ENCODE measurements at regions of chr9 and their contacts with region 1.

Region 1: GRCh38 chr9:134443168-134444037 is 117.1 kb downstream of the RXRA start:
- DNase-seq: peak; percentile 83
- H3K4me3 ChIP-seq: no peak overlapping the region
- H3K27ac ChIP-seq: no peak overlapping the region
- H3K4me1 ChIP-seq: peaks cover 17% of the 10 kb centered on the region
- H3K27me3 ChIP-seq: no peaks in the 10 kb centered on the region
- CTCF ChIP-seq: peak; percentile 95 to 99 (median 98)
- POLR2A ChIP-seq: no peak

Region 2: GRCh38 chr9:134170532-134171315 is 272.7 kb before region 1 on chr9:
- intact Hi-C with region 1: loop called (anchors 1 kb)
- DNase-seq: no peak
- H3K4me3 ChIP-seq: no peak overlapping the region
- H3K27ac ChIP-seq: no peak overlapping the region
- H3K4me1 ChIP-seq: peaks cover 22% of the 10 kb centered on the region
- H3K27me3 ChIP-seq: no peaks in the 10 kb centered on the region
- CTCF ChIP-seq: no peak
- POLR2A ChIP-seq: no peak

Region 3: GRCh38 chr9:134205672-134206310 is 237.6 kb before region 1 on chr9:
- intact Hi-C with region 1: no loop called
- DNase-seq: no peak
- H3K4me3 ChIP-seq: no peak overlapping the region
- H3K27ac ChIP-seq: no peak overlapping the region
- H3K4me1 ChIP-seq: no peaks in the 10 kb centered on the region
- H3K27me3 ChIP-seq: no peaks in the 10 kb centered on the region
- CTCF ChIP-seq: no peak
- POLR2A ChIP-seq: no peak